ENCODE measurements at regions of chr11 and their contacts with region 1.

Region 1: GRCh38 chr11:117178210-117179034 is at the start of gene SIDT2:
- H3K4me3 ChIP-seq: peak within 1 kb of the TSS; percentile 63
- H3K27ac ChIP-seq: peak within 1 kb of the TSS; percentile 33; the same call in 1 of the 2 replicates
- H3K4me1 ChIP-seq: no peaks in the 10 kb centered on the region
- CTCF ChIP-seq: no peak

Region 2: DNA sequence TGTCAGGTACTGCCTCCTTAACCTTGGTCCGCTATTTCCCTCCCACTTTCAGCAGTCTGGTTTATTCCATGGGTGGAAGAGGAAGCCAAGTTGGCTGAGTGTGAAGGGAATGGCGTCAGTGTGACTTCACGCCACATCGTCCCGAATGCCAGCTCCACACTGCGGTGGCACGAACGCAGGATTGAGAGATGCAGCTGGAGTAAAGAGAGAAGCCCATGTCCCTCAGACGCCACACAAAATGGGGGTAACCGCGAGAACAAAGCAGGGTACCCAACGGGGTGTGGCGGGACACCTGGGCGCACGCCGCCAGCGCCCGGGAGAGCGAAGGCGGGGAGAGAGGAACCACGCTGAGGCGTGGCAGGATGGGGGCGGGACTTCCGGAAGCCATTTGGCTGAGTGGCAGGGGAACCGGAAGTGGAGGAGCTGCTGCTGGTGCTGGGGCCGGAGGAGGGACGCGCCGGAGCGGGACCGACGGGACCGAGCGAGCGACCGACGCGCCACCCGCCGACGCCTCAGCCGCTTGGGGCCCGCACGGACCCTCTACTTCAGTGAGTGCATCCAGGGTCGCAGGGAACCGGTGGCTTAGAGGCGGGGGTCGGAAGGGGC is 34.4 kb before region 1 on chr11 and contains the start of gene PAFAH1B2:
- CTCF ChIA-PET with region 1: interaction called, 12 read pairs
- POLR2A ChIA-PET with region 1: interaction called, 28 read pairs
- H3K4me3 ChIP-seq: peak within 1 kb of the TSS; percentile 94
- H3K27ac ChIP-seq: peak within 1 kb of the TSS; percentile 82
- H3K4me1 ChIP-seq: no peaks in the 10 kb centered on the region
- CTCF ChIP-seq: no peak

Region 3: DNA sequence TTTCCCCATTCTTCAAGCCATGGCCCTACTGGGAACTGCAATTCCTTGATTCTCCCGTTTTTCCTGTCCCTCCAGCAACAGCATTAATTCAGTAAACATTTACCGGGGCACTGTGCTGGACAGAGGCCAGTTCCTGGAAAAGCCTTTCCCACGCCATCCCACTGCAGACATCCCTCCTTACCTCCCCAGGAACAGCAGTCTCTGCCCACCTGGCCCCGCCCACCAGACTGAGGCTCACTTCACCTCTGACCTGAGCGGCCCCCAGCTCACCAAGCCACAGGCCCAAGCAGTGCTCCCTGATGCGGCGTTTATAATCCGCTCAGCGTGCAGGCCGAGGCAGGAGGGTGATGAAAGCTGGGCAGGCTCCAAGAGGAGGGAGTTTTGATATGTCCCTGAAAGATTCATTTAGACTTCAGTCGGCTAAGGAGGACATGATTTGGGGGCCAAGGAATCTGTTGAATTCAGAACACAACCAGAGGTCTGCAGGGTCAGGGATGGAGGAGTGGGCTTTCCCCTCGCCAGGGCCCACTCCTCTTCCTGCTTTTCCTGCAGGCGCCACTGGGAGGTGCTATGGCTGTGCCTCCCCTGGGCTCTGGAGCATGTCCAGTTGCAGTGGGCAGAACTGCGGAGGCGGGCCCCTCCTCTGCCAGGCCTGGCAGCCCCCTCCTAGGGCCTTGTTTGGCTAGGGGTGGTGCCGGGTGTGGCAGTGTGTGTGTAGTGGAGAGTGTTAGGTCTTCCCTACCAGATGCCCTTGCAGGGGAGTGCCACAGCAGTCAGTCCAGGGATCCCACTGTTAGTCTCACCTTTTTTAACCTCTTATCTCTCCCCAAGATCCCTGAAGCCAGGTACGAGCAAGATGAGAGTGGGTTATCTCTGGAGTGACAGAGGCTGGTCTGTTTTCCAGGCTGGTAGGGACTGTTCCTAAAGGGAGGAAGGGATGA is 19.4 kb after region 1 on chr11:
- CTCF ChIA-PET with region 1: interaction called, 14 read pairs
- POLR2A ChIA-PET with region 1: interaction called, 5 read pairs
- H3K4me3 ChIP-seq: no peak overlapping the region
- H3K27ac ChIP-seq: no peak overlapping the region
- H3K4me1 ChIP-seq: no peaks in the 10 kb centered on the region
- CTCF ChIP-seq: no peak

Region 4: GRCh38 chr11:117226388-117227385 is 48.3 kb after region 1 on chr11:
- CTCF ChIA-PET with region 1: interaction called, 71 read pairs
- POLR2A ChIA-PET with region 1: interaction called, 9 read pairs
- H3K4me3 ChIP-seq: no peak overlapping the region
- H3K27ac ChIP-seq: no peak overlapping the region
- H3K4me1 ChIP-seq: peaks cover 3% of the 10 kb centered on the region; the same call in 1 of the 2 replicates
- CTCF ChIP-seq: no peak

Region 5: GRCh38 chr11:117232092-117232878 is 53.9 kb after region 1 on chr11 and contains the start of gene RNF214:
- CTCF ChIA-PET with region 1: interaction called, 71 read pairs
- POLR2A ChIA-PET with region 1: interaction called, 3 read pairs
- H3K4me3 ChIP-seq: peak within 1 kb of the TSS; percentile 88
- H3K27ac ChIP-seq: peak within 1 kb of the TSS; percentile 74
- H3K4me1 ChIP-seq: no peaks in the 10 kb centered on the region
- CTCF ChIP-seq: peak; percentile 65; the same call in 1 of the 2 replicates